ENCODE measurements at regions of chr11 and their contacts with region 1.

Region 1: GRCh38 chr11:66438504-66439466 is at the start of gene MRPL11:
- DNase-seq: peak; percentile 85
- H3K4me3 Mint-ChIP-seq: peak within 1 kb of the TSS; percentile 94
- H3K27ac Mint-ChIP-seq: peak within 1 kb of the TSS; percentile 97
- H3K4me1 Mint-ChIP-seq: peaks cover 8% of the 10 kb centered on the region
- H3K27me3 Mint-ChIP-seq: no peaks in the 10 kb centered on the region
- total RNA-seq, gene MRPL11: 92.9 and 96.1 TPM in 2 replicates

Region 2: GRCh38 chr11:66408488-66409214 is 30.1 kb before region 1 on chr11:
- intact Hi-C with region 1: loop called (anchors 2 kb)
- DNase-seq: peak; percentile 89
- H3K4me3 Mint-ChIP-seq: peak overlapping the region; percentile 78
- H3K27ac Mint-ChIP-seq: no peak overlapping the region
- H3K4me1 Mint-ChIP-seq: peaks cover 4% of the 10 kb centered on the region
- H3K27me3 Mint-ChIP-seq: peaks cover 13% of the 10 kb centered on the region

Region 3: DNA sequence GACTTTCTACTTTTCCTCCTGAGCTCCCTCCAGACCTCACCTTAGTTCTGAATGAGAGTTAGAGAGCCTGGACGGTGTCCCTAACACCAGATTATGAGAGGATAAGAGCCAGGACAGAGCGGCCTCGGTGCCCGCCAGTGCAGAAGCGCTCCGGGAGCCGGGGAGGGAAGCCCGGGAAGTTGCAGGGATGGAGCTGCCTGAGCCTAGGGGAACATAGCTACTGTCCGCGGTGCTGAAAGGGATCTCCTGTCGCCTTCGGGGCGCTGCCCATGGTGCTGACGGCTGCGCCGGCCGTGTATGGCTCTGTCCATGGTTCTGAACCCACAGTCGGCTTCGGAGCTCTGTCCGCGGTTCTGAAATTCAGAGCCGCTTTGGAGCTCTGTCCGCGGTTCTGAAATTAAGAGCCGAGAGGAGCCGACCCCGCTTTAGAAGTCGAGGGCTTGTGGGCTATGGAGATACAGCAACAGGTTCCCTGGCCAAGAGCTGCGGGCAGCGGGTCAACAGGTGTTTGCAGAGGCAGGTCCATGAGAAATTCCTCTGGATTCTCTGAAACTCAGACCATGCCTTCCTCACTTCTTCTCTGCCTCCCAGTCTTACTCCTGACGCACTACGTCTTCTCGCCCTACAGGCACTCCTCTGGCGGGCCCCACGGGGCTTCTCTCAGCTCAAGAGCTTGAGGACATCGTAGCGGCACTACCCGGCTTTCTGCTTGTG is 17.1 kb before region 1 on chr11:
- intact Hi-C with region 1: loop called (anchors 1 kb)
- DNase-seq: peak; percentile 85
- H3K4me3 Mint-ChIP-seq: no peak overlapping the region
- H3K27ac Mint-ChIP-seq: no peak overlapping the region
- H3K4me1 Mint-ChIP-seq: peaks cover 27% of the 10 kb centered on the region
- H3K27me3 Mint-ChIP-seq: peaks cover 21% of the 10 kb centered on the region

Region 4: GRCh38 chr11:66466225-66467027 is 27.6 kb after region 1 on chr11 and contains the start of gene PELI3:
- intact Hi-C with region 1: loop called (anchors 1 kb)
- DNase-seq: peak; percentile 86
- H3K4me3 Mint-ChIP-seq: peak within 1 kb of the TSS; percentile 91
- H3K27ac Mint-ChIP-seq: peak within 1 kb of the TSS; percentile 81
- H3K4me1 Mint-ChIP-seq: peaks cover 29% of the 10 kb centered on the region
- H3K27me3 Mint-ChIP-seq: no peaks in the 10 kb centered on the region
- total RNA-seq, gene PELI3: 14.6 and 15.7 TPM in 2 replicates

Region 5: GRCh38 chr11:66480117-66480938 is 41.5 kb after region 1 on chr11 and contains the start of gene DPP3:
- intact Hi-C with region 1: loop called (anchors 1 kb)
- DNase-seq: peak; percentile 96
- H3K4me3 Mint-ChIP-seq: peak within 1 kb of the TSS; percentile 85
- H3K27ac Mint-ChIP-seq: peak within 1 kb of the TSS; percentile 84
- H3K4me1 Mint-ChIP-seq: peaks cover 28% of the 10 kb centered on the region
- H3K27me3 Mint-ChIP-seq: no peaks in the 10 kb centered on the region
- total RNA-seq, gene DPP3: 109 and 119 TPM in 2 replicates